ENCODE measurements at regions of chr19 and their contacts with region 1.

Region 1: DNA sequence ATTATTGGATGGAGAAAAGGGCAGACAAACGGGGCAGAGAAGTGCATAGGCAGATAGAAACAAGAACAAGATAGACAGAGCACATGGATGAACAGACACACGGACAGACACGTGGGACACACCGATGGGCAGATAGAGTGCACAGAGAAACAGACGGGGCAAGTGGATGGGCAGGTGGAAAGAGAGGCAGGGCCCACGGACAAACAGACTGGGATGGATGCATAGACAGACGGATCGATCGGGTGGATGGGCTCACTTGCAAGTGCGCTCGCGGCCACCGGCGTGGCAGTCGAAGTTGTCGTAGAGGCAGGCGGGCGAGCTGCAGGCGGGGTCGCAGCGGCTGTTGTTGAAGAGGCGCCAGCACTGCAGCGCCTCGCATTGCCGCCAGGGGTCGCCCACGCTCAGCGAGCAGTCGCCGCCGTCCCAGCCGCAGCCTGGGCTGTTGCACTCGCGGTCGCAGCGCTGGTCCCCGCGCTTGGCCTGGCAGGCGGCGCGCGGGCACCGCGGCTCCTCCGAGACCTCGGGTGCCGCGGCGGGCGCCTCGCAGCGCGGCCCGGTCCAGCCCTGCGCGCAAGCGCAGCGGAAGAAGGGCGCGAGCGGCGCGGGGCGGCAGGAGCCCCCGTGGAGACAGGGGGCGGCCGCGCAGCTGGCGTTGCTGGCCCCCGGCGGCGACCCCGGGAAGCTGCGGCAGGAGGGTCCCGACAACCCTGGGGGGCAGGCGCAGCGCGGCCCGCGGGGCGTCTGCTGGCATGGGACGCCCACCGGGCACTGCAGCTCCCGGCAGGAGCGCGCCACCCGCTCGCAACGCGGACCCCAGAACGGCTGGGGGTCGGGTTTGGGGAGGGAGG is 23.3 kb downstream of the NOTCH3 start:
- DNase-seq: peak; percentile 65 to 87 (median 81)
- H3K4me3 ChIP-seq: peak overlapping the region in 1 of 4 donors; percentile 47
- H3K27ac ChIP-seq: no peak overlapping the region
- H3K4me1 ChIP-seq: no peaks in the 10 kb centered on the region
- H3K27me3 ChIP-seq: no peaks in the 10 kb centered on the region
- CTCF ChIP-seq: peak; percentile 78 to 100 (median 92)
- POLR2A ChIP-seq: no peak

Region 2: DNA sequence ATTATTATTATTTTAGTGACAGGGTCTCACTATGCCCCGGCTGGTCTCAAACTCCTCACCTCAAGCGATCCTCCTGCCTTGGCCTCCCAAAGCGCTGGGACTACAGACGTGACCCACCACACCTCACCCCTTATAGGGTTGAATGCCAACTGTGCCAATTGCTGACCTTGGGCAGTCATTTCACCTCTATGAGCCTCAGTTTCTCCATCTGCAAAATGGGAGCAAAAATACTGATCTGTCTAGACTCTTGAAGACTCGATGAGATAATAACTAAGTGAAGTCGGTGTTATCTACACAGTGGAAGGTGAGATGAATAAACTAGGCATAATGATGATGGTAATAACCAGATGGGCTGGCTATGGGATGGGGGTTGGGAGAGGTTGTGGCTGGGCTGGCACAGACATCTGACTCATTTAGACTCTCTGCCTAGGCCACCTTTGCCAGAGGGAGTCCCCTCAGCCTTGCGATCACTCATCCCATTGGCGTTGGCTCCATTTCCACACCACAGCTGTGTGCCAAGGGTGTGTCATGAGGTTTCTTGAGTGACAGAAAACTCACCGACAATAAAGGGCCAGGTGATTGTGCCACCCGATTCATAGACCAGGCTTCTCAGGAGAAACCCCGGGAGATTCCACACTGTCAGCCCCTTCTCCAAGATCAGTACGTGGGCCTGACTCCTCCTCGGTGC is 128.5 kb before region 1 on chr19 and contains the start of gene CASP14:
- intact Hi-C with region 1: no loop called
- DNase-seq: no peak
- H3K4me3 ChIP-seq: no peak within 1 kb of the TSS
- H3K27ac ChIP-seq: no peak within 1 kb of the TSS
- H3K4me1 ChIP-seq: no peaks in the 10 kb centered on the region
- H3K27me3 ChIP-seq: no peaks in the 10 kb centered on the region
- CTCF ChIP-seq: no peak
- POLR2A ChIP-seq: no peak
- total RNA-seq, gene CASP14: not detected

Region 3: GRCh38 chr19:15144036-15144646 is 33.4 kb before region 1 on chr19:
- intact Hi-C with region 1: no loop called
- DNase-seq: no peak
- H3K4me3 ChIP-seq: no peak overlapping the region
- H3K27ac ChIP-seq: no peak overlapping the region
- H3K4me1 ChIP-seq: no peaks in the 10 kb centered on the region
- H3K27me3 ChIP-seq: no peaks in the 10 kb centered on the region
- CTCF ChIP-seq: no peak
- POLR2A ChIP-seq: no peak

Region 4: GRCh38 chr19:15222738-15223648 is 45.5 kb after region 1 on chr19:
- intact Hi-C with region 1: no loop called
- DNase-seq: peak; percentile 87 to 96 (median 92)
- H3K4me3 ChIP-seq: peak overlapping the region in 2 of 4 donors; percentile 23 to 75
- H3K27ac ChIP-seq: peak overlapping the region in 1 of 5 donors; percentile 41
- H3K4me1 ChIP-seq: peaks cover 5 to 10% of the 10 kb centered on the region in 2 donors
- H3K27me3 ChIP-seq: no peaks in the 10 kb centered on the region
- CTCF ChIP-seq: no peak
- POLR2A ChIP-seq: no peak

Region 5: GRCh38 chr19:15251749-15252397 is 74.4 kb after region 1 on chr19:
- intact Hi-C with region 1: loop called (anchors 5 kb)
- DNase-seq: peak; percentile 74 to 93 (median 91)
- H3K4me3 ChIP-seq: peak overlapping the region in 1 of 4 donors; percentile 47
- H3K27ac ChIP-seq: peak overlapping the region; percentile 35 to 96 (median 83)
- H3K4me1 ChIP-seq: peaks cover 42 to 64% of the 10 kb centered on the region in 2 donors
- H3K27me3 ChIP-seq: no peaks in the 10 kb centered on the region
- CTCF ChIP-seq: peak in 5 of 6 experiments; percentile 41 to 73 (median 50)
- POLR2A ChIP-seq: peak in 1 of 2 donors; percentile 37

Region 6: DNA sequence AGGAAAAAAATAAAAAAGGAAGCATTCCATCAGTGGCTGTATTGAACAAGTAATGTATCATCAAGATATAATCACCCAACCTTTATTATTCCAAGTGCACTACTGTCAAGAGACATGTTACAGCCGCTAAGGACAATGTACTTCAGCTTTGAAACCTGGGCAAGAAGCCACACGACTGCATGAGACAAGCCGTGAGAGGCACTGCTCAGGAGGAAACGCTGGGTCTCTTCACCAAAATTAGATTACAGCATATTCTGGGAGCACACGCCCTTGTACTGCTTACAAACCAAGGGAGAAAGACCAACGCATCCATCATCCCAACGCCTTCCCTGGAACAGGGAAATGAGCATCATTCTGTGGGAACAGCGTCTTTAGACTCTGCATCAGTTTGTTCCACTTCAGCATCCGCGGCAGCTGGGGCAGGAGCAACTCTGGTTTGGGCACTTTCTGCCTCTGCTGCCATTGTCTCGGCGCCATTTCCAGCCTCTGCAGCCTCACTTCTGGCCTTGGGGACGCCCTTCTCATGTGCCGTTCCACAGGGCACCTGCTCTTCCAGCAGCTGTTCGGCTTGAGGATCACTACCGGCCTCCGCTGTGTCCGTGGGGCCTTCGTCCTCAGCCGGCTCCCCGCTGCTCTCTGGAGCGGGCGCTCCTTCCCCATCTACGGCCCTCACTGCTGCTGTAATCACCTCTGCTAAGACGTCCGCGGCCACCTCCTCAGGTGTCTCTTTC is 177.2 kb after region 1 on chr19:
- intact Hi-C with region 1: loop called in 1 of 2 experiments (anchors 10 kb)
- DNase-seq: no peak
- H3K4me3 ChIP-seq: no peak overlapping the region
- H3K27ac ChIP-seq: no peak overlapping the region
- H3K4me1 ChIP-seq: no peaks in the 10 kb centered on the region
- H3K27me3 ChIP-seq: no peaks in the 10 kb centered on the region
- CTCF ChIP-seq: no peak
- POLR2A ChIP-seq: no peak

Region 7: DNA sequence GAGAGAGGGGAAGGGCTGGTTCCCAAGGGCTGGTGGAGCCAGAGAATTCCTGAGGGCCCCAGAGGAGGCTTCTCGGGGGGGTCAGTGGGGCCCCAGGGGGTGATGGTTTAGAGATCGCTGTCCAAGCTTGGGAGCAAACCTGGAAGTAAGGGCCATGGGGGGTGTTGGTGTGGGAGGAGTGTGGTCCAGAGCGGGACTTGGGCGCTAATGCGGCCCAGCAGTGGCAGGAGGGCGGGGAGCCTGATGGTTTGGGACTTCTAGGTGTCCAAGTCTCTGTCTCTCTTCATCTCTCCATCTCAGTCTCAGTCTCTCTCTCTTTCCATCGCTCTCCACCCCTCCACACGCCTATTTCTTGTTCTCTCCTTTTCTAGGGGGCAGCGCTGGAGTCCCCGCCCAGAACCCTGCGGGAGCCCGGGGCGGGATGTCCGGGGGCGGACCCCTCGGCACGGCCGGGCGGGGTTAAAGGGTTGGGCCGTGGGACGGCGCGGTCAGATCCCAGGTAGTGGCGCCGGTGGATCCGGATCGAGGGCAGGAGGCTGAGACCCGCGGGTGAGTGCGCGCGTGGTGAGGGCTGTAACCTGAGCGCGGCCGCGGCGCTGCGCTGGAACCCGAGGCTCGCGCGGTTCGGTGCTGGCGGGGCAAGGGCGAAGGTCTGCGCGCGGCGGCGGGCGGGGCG is 330.7 kb after region 1 on chr19 and contains the start of gene CYP4F22:
- intact Hi-C with region 1: no loop called
- DNase-seq: no peak
- H3K4me3 ChIP-seq: peak within 1 kb of the TSS in 1 of 4 donors; percentile 19
- H3K27ac ChIP-seq: no peak within 1 kb of the TSS
- H3K4me1 ChIP-seq: no peaks in the 10 kb centered on the region
- H3K27me3 ChIP-seq: peaks cover 33% of the 10 kb centered on the region
- CTCF ChIP-seq: no peak
- POLR2A ChIP-seq: no peak
- total RNA-seq, gene CYP4F22: 0.11 to 0.34 TPM in 2 of 9 donors, not detected in the others

Measured in adrenal gland (tissue), 19 donors.